Head of caudate nucleus (tissue), 42 donors: ENCODE measurements at regions of chr19 and their contacts with region 1.

Region 1: GRCh38 chr19:48646001-48646721 is at the start of gene CA11:
- DNase-seq: peak; percentile 72 to 96 (median 91)

Region 2: DNA sequence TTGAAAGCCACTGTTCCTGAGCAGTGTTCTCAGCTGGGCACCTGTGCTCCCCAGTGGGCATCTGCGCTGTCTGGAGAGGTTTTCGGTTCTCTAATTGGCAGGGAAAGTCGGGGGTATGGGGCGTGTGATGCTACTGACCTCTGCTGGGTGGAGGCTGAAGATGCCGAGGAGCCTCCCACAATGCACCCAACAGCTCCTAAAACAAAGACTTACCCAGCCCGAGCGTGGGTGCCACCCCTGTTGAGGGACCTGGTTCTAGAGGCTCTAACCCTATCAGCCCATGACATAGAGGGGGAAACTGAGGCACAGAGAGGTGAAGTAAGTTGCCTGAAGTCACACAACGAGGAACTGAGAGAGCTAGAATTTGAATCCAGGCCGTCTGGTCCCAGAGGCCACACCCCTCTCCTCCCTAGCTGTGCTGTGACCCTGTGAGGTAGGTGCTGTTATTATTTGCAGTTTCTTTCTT is 37.3 kb before region 1 on chr19:
- intact Hi-C with region 1: no loop called
- DNase-seq: peak in 25 of 42 donors; percentile 32 to 73 (median 51)

Region 3: GRCh38 chr19:48713864-48714758 is 68.0 kb after region 1 on chr19:
- intact Hi-C with region 1: loop called (anchors 2 kb)
- DNase-seq: peak; percentile 95 to 100 (median 99)

Region 4: DNA sequence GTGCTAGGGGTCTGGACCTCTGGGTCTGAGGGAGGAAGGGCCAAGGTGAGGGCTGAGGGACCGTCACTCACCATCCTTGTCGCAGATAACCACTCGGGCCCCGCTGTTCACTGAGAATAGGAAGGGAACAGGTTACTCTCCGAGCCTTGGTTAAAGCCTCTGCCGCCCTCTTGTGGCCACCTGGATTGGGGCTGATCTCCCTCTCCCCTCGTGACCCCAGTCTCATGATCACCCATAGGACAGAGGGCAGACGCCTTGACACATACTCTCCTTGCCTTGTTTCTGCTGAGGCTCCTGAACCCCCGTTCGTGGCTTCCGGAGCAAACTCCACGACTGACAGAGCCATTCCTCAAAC is 189.6 kb after region 1 on chr19:
- intact Hi-C with region 1: loop called (anchors 10 kb)
- DNase-seq: peak; percentile 87 to 97 (median 94)